ENCODE measurements at regions of chr1 and their contacts with region 1.

Region 1: GRCh38 chr1:205680073-205680851 is at the start of gene SLC45A3:
- DNase-seq: no peak
- ATAC-seq: peak; percentile 85
- H3K4me3 ChIP-seq: peak within 1 kb of the TSS; percentile 77
- H3K27ac ChIP-seq: no peak within 1 kb of the TSS
- H3K4me1 ChIP-seq: peaks cover 9% of the 10 kb centered on the region
- H3K27me3 ChIP-seq: peaks cover 0 to 4% of the 10 kb centered on the region in 2 experiments; a peak in 1 of 4 replicates
- CTCF ChIP-seq: no peak
- EP300 ChIP-seq: no peak
- POLR2A ChIP-seq: no peak
- RAD21 ChIP-seq: no peak
- polyA plus RNA-seq, gene SLC45A3: 0.26 to 0.60 TPM

Region 2: DNA sequence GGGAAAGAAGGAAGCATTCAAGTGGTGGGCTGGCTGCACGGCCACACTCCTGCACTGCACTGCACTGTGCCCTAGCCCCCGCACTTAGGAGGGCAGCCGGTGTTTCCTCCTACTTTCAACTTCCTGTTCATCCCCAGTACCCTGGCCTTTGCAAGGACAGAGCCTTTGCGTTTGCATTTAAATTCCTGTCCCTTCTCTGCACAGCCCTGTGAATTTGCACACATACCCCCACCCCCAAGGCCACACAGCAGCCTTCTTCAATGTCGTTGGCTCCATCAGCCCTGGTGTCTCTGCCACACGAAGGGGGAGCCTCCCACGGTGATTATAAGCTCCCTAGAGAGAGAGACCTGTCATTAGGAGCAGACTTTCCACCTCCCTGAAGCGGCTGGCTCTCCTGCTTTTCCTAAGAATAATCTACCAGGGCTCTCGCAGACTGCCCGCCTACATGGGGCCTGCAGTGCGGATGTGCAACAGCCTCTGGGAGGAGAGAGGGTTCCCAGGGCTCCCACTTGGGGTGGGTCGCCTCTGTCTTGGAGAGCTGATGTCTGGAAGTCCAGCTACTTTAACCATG is 13.2 kb after region 1 on chr1:
- CTCF ChIA-PET with region 1: interaction called, 11 read pairs
- POLR2A ChIA-PET with region 1: no interaction called
- RAD21 ChIA-PET with region 1: no interaction called
- SMC1A ChIA-PET with region 1: interaction called, 1,008 read pairs
- in situ Hi-C with region 1: no loop called
- intact Hi-C with region 1: no loop called
- DNase-seq: no peak
- ATAC-seq: peak; percentile 59; the same call in 2 of the 3 replicates
- H3K4me3 ChIP-seq: no peak overlapping the region
- H3K27ac ChIP-seq: no peak overlapping the region
- H3K4me1 ChIP-seq: 0 out of 2 replicates have a peak, but pooled peaks cover 3% of the 10 kb centered on the region
- H3K27me3 ChIP-seq: no peaks in the 10 kb centered on the region
- CTCF ChIP-seq: no peak
- EP300 ChIP-seq: no peak
- POLR2A ChIP-seq: no peak
- RAD21 ChIP-seq: no peak

Measured in GM12878 (cell line).